Activated B cell treated with CpG ODN at 0.5 μM for 24 hours (primary cell): ENCODE measurements at regions of chr10 and their contacts with region 1.

Region 1: GRCh38 chr10:116787893-116788665 is 45.7 kb upstream of the HSPA12A start:
- DNase-seq: peak; percentile 49
- ATAC-seq: peak; percentile 82
- H3K4me3 Mint-ChIP-seq: peak overlapping the region; percentile 46
- H3K27ac Mint-ChIP-seq: no peak overlapping the region
- H3K4me1 Mint-ChIP-seq: peaks cover 12% of the 10 kb centered on the region
- H3K27me3 Mint-ChIP-seq: peaks cover 20% of the 10 kb centered on the region
- CTCF ChIP-seq: peak; percentile 96

Region 2: DNA sequence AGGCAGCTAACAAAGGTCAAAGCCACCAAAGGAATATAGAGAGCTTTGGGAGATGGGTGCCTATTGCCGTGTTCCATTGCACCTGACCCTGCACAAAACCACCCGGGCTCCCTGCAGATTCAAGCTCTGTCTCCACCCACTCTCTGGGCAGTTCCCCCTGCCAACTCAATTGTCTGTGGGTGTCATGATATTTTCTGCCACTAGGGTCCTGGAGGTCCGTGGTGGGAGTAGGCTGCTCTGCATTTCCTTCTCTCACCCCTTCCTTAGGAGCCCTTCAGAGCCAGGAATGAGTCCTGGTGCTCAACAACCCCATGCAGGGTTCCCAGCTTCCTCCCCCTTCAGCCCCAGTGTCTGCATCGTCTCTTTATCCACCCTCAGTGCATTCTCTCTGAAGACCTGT is 133.3 kb before region 1 on chr10:
- CTCF ChIA-PET with region 1: no interaction called
- POLR2A ChIA-PET with region 1: no interaction called
- intact Hi-C with region 1: no loop called
- DNase-seq: no peak
- ATAC-seq: no peak
- H3K4me3 Mint-ChIP-seq: no peak overlapping the region
- H3K27ac Mint-ChIP-seq: no peak overlapping the region
- H3K4me1 Mint-ChIP-seq: no peaks in the 10 kb centered on the region
- H3K27me3 Mint-ChIP-seq: peaks cover 5% of the 10 kb centered on the region
- CTCF ChIP-seq: no peak

Region 3: GRCh38 chr10:116687633-116688032 is 100.4 kb before region 1 on chr10:
- CTCF ChIA-PET with region 1: no interaction called
- POLR2A ChIA-PET with region 1: no interaction called
- intact Hi-C with region 1: loop called (anchors 2 kb)
- DNase-seq: no peak
- ATAC-seq: no peak
- H3K4me3 Mint-ChIP-seq: no peak overlapping the region
- H3K27ac Mint-ChIP-seq: no peak overlapping the region
- H3K4me1 Mint-ChIP-seq: no peaks in the 10 kb centered on the region
- H3K27me3 Mint-ChIP-seq: no peaks in the 10 kb centered on the region
- CTCF ChIP-seq: no peak

Region 4: GRCh38 chr10:117094856-117095255 is 306.8 kb after region 1 on chr10:
- CTCF ChIA-PET with region 1: no interaction called
- POLR2A ChIA-PET with region 1: no interaction called
- intact Hi-C with region 1: no loop called
- DNase-seq: no peak
- ATAC-seq: no peak
- H3K4me3 Mint-ChIP-seq: no peak overlapping the region
- H3K27ac Mint-ChIP-seq: no peak overlapping the region
- H3K4me1 Mint-ChIP-seq: no peaks in the 10 kb centered on the region
- H3K27me3 Mint-ChIP-seq: no peaks in the 10 kb centered on the region
- CTCF ChIP-seq: no peak